ENCODE measurements at regions of chr19 and their contacts with region 1.

Region 1: GRCh38 chr19:37217855-37218591 is at the start of gene ZNF383:
- DNase-seq: peak; percentile 84
- ATAC-seq: peak; percentile 98
- H3K4me3 ChIP-seq: peak within 1 kb of the TSS; percentile 66
- H3K27ac ChIP-seq: peak within 1 kb of the TSS; percentile 96
- H3K4me1 ChIP-seq: no peaks in the 10 kb centered on the region
- H3K27me3 ChIP-seq: no peaks in the 10 kb centered on the region
- CTCF ChIP-seq: no peak
- POLR2A ChIP-seq: no peak
- RAD21 ChIP-seq: no peak
- total RNA-seq, gene ZNF383: 3.6 and 4.5 TPM in 2 replicates

Region 2: DNA sequence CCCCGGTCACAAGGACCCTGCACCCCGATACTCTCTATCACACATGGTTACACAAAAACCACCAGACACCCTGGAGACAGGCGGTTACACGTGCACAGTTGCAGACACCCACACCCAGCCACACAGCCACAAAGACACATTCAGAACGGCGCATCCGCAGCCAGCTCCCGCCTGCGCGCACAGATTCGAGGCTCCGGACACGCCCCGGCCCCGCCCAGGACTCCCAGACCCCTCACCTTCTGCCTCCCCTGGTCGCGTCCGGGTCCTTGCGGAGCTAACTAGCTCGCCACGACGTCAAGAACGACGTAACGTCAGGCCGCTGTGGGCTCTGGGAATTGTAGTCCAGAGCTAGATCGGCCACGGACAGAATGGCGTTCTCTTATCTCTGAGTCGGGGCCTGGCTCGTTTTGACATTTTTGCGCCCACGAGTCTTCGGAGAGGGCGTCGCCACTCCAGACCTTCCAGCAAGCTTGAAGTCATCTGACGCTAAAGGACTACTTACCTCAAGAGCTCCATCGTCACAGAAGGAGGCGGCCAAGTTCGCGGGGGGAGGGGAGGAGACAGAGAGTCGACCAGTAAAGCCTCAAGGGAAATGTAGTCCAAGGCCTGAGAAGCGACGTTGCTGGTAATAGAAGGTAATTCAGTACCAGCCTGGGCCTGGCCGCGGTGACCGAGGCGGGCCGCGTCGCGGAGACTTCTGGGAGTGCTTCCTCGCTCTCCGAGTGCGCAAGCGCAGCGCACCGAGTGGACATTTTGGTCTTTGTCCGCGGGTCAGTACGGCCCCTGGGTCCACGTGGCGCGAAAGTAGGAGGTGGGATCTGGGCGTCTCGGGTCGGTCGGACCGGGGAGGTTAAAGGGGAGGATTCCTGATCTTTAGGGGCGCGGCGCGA is 1003.4 kb before region 1 on chr19 and contains the starts of genes ZNF146 and ZNF565:
- CTCF ChIA-PET with region 1: no interaction called
- POLR2A ChIA-PET with region 1: no interaction called
- dilution Hi-C with region 1: no loop called
- in situ Hi-C with region 1: loop called (anchors 25 kb)
- intact Hi-C with region 1: no loop called
- DNase-seq: peak; percentile 98
- ATAC-seq: peak; percentile 96
- H3K4me3 ChIP-seq: peak within 1 kb of the TSS; percentile 67
- H3K27ac ChIP-seq: peak within 1 kb of the TSS; percentile 92
- H3K4me1 ChIP-seq: peaks cover 2% of the 10 kb centered on the region
- H3K27me3 ChIP-seq: no peaks in the 10 kb centered on the region
- CTCF ChIP-seq: no peak
- POLR2A ChIP-seq: peak; percentile 88
- RAD21 ChIP-seq: no peak
- total RNA-seq, gene ZNF146: 106 and 129 TPM in 2 replicates
- total RNA-seq, gene ZNF565: 6.4 and 7.5 TPM in 2 replicates

Region 3: GRCh38 chr19:36876993-36877938 is 340.8 kb before region 1 on chr19:
- CTCF ChIA-PET with region 1: no interaction called
- POLR2A ChIA-PET with region 1: no interaction called
- dilution Hi-C with region 1: no loop called
- in situ Hi-C with region 1: no loop called
- intact Hi-C with region 1: no loop called
- DNase-seq: no peak
- ATAC-seq: no peak
- H3K4me3 ChIP-seq: no peak overlapping the region
- H3K27ac ChIP-seq: no peak overlapping the region
- H3K4me1 ChIP-seq: no peaks in the 10 kb centered on the region
- H3K27me3 ChIP-seq: no peaks in the 10 kb centered on the region
- CTCF ChIP-seq: no peak
- POLR2A ChIP-seq: no peak
- RAD21 ChIP-seq: no peak

Region 4: GRCh38 chr19:36973021-36973843 is 244.8 kb before region 1 on chr19:
- CTCF ChIA-PET with region 1: interaction called, 3 read pairs
- POLR2A ChIA-PET with region 1: no interaction called
- dilution Hi-C with region 1: no loop called
- in situ Hi-C with region 1: no loop called
- intact Hi-C with region 1: loop called (anchors 5 kb)
- DNase-seq: peak; percentile 50
- ATAC-seq: peak; percentile 97
- H3K4me3 ChIP-seq: peak overlapping the region; percentile 96
- H3K27ac ChIP-seq: peak overlapping the region; percentile 75
- H3K4me1 ChIP-seq: no peaks in the 10 kb centered on the region; the same call in 1 of the 2 replicates
- H3K27me3 ChIP-seq: no peaks in the 10 kb centered on the region
- CTCF ChIP-seq: peak; percentile 54
- POLR2A ChIP-seq: no peak
- RAD21 ChIP-seq: peak; percentile 48

Region 5: GRCh38 chr19:37160153-37160552 is 57.9 kb before region 1 on chr19:
- CTCF ChIA-PET with region 1: no interaction called
- POLR2A ChIA-PET with region 1: no interaction called
- dilution Hi-C with region 1: no loop called
- in situ Hi-C with region 1: no loop called
- intact Hi-C with region 1: no loop called
- DNase-seq: no peak
- ATAC-seq: no peak
- H3K4me3 ChIP-seq: no peak overlapping the region
- H3K27ac ChIP-seq: no peak overlapping the region
- H3K4me1 ChIP-seq: no peaks in the 10 kb centered on the region
- H3K27me3 ChIP-seq: no peaks in the 10 kb centered on the region
- CTCF ChIP-seq: no peak
- POLR2A ChIP-seq: no peak
- RAD21 ChIP-seq: no peak

Region 6: GRCh38 chr19:37370880-37371661 is 153.0 kb after region 1 on chr19 and contains the start of gene ZNF527:
- CTCF ChIA-PET with region 1: no interaction called
- POLR2A ChIA-PET with region 1: no interaction called
- dilution Hi-C with region 1: no loop called
- in situ Hi-C with region 1: no loop called
- intact Hi-C with region 1: loop called (anchors 5 kb)
- DNase-seq: peak; percentile 96
- ATAC-seq: peak; percentile 99
- H3K4me3 ChIP-seq: peak within 1 kb of the TSS; percentile 74
- H3K27ac ChIP-seq: peak within 1 kb of the TSS; percentile 51
- H3K4me1 ChIP-seq: no peaks in the 10 kb centered on the region
- H3K27me3 ChIP-seq: no peaks in the 10 kb centered on the region
- CTCF ChIP-seq: no peak
- POLR2A ChIP-seq: peak; percentile 68; the same call in 1 of the 2 replicates
- RAD21 ChIP-seq: no peak
- total RNA-seq, gene ZNF527: 3.6 and 5.0 TPM in 2 replicates

Measured in IMR-90 (cell line).